A549 (cell line): ENCODE measurements at regions of chr18 and their contacts with region 1.

Region 1: DNA sequence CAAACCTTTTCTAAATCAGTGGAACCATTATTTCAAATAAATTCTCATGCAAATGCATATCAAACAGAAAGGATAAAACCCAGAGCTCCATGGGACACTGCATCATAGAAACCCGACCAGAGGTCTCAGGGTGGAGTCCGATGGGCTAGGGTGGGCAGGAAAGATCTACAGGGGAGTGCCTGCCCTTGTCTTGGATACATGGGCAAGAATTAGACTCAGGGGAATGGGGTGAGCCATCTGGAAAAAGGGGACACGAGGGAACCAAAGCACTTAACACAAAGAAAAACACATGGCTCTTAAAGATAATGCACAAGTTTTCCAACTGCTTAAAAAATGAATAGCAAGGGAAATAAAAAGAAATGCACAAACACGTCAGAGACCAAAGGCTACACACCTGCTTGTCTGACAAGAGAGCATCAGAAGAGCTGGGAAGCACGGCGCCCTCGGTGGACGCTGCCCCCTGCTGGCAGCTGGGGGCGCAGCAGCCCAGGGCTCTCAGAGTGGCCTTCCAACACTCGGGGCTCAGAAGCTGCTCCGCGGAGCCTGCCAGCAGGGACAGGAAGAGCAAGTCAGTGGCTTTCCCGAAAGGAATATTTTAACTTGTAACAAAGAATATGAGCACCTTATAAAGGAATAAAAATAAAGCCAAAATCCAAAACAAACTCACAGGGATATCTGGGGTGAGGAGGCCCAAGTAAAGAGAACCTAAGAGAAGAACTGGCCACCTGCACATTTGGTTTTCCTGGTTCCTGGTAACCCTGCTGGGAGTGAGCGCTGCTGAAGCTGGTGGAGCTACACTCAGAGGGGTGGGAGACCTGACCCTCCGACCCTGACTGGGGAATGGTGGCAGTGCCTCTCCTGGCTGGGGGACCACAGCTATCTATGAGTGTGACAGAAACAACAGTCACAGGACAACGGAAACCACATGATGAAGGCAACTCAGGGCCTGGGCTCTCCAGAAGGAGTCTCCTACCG is 54.5 kb downstream of the SIGLEC15 start:
- DNase-seq: peak; percentile 28 to 48
- ATAC-seq: peak; percentile 97 to 98
- H3K4me3 ChIP-seq: no peak overlapping the region
- H3K27ac ChIP-seq: no peak overlapping the region
- H3K4me1 ChIP-seq: no peaks in the 10 kb centered on the region
- CTCF ChIP-seq: peak; percentile 81
- EP300 ChIP-seq: no peak
- POLR2A ChIP-seq: no peak
- RAD21 ChIP-seq: peak; percentile 72 to 75

Region 2: DNA sequence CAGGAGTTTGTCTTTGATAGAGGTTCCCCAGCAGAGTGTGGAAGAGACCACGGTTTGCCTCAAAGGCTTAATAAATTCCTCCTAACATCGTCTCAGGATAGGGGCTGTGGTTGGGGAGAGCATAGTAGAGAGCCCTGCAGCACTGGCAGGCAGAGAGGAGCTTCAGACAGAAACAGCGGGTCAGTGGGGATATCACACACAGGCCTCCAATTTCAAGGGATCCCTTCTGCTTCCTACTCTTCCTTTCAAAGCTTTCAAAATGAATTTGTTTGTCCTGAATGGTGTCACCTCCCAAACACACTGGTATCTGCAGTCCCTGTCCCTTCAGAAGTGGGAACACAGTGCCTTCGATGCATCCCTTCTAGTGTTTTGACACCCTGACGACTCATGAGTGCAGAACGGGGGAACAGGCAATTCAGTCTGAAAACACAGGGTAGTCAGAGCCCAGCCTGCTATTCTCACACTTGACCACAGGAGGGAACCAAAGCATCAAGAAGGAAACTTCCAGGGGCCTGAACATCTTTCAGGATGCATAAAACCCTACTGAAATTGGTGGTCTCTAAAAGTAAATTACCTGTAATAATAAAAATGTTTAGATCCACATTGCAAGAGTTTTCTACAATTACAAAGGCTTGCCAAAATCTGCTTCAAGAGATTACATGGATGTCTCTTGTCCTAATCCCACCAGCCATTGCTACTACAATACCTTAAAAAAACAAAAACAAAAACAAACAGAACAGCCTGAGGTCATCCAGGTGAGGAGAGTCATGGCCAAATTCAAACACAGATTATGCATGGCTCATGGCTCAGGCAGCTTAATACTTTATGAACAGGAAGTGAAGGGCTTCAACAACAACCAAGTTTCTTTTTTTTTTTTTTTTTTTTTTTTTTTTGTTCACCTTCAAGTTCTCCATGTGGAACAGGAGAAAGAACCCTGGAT is 214.9 kb before region 1 on chr18:
- CTCF ChIA-PET with region 1: interaction called, 44 read pairs
- POLR2A ChIA-PET with region 1: no interaction called
- DNase-seq: peak; percentile 46 to 51
- ATAC-seq: peak; percentile 69 to 89; a peak in 5 of 6 replicates
- H3K4me3 ChIP-seq: no peak overlapping the region
- H3K27ac ChIP-seq: no peak overlapping the region
- H3K4me1 ChIP-seq: no peaks in the 10 kb centered on the region
- CTCF ChIP-seq: peak; percentile 71
- EP300 ChIP-seq: no peak
- POLR2A ChIP-seq: no peak
- RAD21 ChIP-seq: peak; percentile 82

Region 3: GRCh38 chr18:45690975-45691815 is 188.8 kb before region 1 on chr18:
- CTCF ChIA-PET with region 1: interaction called, 62 read pairs
- POLR2A ChIA-PET with region 1: no interaction called
- DNase-seq: peak; percentile 31 to 69
- ATAC-seq: peak; percentile 93 to 97
- H3K4me3 ChIP-seq: no peak overlapping the region
- H3K27ac ChIP-seq: no peak overlapping the region
- H3K4me1 ChIP-seq: no peaks in the 10 kb centered on the region
- CTCF ChIP-seq: peak; percentile 79
- EP300 ChIP-seq: no peak
- POLR2A ChIP-seq: no peak
- RAD21 ChIP-seq: peak; percentile 87 to 95

Region 4: DNA sequence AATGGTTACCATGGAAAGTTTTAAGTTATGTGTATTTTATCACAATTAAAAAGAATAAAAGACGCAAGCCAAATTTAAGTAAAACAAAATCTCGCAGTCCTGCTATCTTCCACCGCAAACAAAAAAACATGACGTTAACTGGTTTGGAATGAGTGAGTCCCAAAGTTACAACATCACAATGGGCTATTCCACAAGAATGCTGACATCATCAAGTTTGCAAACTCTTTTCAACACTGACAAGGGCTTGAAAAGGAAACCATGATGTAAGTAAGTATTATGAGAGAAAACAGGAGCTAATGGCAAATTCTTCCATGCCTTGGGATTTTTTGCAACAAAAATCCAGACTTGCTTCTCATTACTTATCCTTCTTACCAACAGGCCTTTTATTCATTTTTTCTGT is 23.4 kb before region 1 on chr18:
- CTCF ChIA-PET with region 1: interaction called, 13 read pairs
- POLR2A ChIA-PET with region 1: no interaction called
- DNase-seq: no peak
- ATAC-seq: no peak
- H3K4me3 ChIP-seq: no peak overlapping the region
- H3K27ac ChIP-seq: no peak overlapping the region
- H3K4me1 ChIP-seq: no peaks in the 10 kb centered on the region
- CTCF ChIP-seq: no peak
- EP300 ChIP-seq: no peak
- POLR2A ChIP-seq: no peak
- RAD21 ChIP-seq: no peak

Region 5: DNA sequence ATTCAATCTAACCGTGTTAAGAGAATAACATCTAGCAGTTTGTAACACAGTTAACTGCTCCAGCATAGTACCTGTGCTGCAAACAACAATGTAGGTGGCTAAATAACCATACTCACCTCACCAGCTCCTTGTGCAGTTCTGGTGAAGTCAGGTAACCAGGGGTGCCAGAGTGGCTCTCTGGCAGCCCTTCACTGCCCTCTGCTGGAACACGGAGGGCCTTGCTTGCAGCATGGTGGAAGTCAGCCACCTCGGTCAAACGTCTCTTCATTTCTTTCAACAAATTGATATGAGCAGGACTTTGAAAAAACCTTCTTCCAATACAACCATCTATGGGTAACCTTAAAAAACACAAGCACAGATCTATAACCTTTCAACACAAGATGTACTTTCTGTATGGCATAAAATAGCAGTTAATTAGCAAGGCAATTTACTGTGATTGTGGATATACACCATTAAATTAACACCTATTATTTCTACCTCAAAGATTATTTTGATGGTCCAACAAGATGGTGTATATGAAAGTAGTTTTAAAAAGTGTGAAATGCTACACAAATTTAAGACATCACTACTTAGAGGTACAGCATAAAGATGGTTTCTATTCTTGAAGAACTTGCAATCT is 30.5 kb after region 1 on chr18:
- CTCF ChIA-PET with region 1: interaction called, 11 read pairs
- POLR2A ChIA-PET with region 1: no interaction called
- DNase-seq: peak; percentile 46 to 53
- ATAC-seq: peak; percentile 81 to 90; a peak in 5 of 6 replicates
- H3K4me3 ChIP-seq: no peak overlapping the region
- H3K27ac ChIP-seq: no peak overlapping the region
- H3K4me1 ChIP-seq: no peaks in the 10 kb centered on the region
- CTCF ChIP-seq: peak; percentile 64
- EP300 ChIP-seq: no peak
- POLR2A ChIP-seq: no peak
- RAD21 ChIP-seq: peak; percentile 66 to 74